B cell (primary cell): ENCODE measurements at regions of chr5 and their contacts with region 1.

Region 1: DNA sequence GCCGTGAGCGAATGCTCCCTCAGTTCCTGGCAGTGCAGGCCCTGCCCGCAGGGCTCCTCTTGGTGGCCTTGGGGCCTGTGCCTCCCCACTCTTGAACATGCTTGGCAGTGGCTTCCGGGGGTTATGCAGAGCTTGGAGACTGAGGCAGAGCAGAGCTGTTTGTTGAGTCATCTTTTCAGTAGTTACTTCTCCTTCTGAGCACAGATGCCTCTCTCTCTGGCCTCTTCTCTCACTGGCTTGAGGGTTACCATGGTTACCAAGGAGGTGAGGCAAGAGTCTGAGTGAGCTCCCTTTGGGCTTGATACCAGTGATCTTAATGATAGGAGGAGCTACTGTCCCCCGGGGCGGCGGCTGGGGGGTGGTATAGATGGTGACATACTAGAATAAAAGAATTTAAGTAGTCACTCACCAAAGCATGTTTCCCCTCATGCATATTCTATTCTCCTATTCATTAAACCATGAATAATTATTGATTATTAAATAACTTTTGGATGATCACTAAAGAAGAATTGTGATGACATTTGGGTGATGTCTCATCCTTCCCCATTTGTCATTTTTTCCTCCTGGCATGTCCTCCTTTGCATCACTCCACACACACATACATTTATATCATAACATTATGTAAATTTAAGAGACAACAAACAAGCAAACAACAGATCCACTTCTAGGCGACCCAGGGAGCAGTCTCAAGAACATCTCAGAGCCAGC is 111.1 kb downstream of the ARHGAP26 start:
- DNase-seq: peak; percentile 47
- ATAC-seq: peak; percentile 54
- H3K4me3 ChIP-seq: no peak overlapping the region
- H3K4me3 Mint-ChIP-seq: no peak overlapping the region
- H3K27ac ChIP-seq: no peak overlapping the region
- H3K27ac Mint-ChIP-seq: no peak overlapping the region
- H3K4me1 ChIP-seq: peaks cover 0 to 5% of the 10 kb centered on the region in 2 donors
- H3K4me1 Mint-ChIP-seq: peaks cover 9% of the 10 kb centered on the region
- H3K27me3 ChIP-seq: no peaks in the 10 kb centered on the region
- H3K27me3 Mint-ChIP-seq: no peaks in the 10 kb centered on the region
- CTCF ChIP-seq: no peak

Region 2: GRCh38 chr5:142655339-142656267 is 225.6 kb before region 1 on chr5:
- CTCF ChIA-PET with region 1: interaction called, 31 read pairs
- POLR2A ChIA-PET with region 1: no interaction called
- intact Hi-C with region 1: loop called (anchors 1 kb)
- DNase-seq: peak; percentile 60
- ATAC-seq: peak; percentile 75
- H3K4me3 ChIP-seq: no peak overlapping the region
- H3K4me3 Mint-ChIP-seq: no peak overlapping the region
- H3K27ac ChIP-seq: no peak overlapping the region
- H3K27ac Mint-ChIP-seq: no peak overlapping the region
- H3K4me1 ChIP-seq: no peaks in the 10 kb centered on the region
- H3K4me1 Mint-ChIP-seq: no peaks in the 10 kb centered on the region
- H3K27me3 ChIP-seq: peaks cover 0 to 12% (median 2%) of the 10 kb centered on the region in 4 experiments
- H3K27me3 Mint-ChIP-seq: peaks cover 50% of the 10 kb centered on the region
- CTCF ChIP-seq: peak; percentile 91

Region 3: DNA sequence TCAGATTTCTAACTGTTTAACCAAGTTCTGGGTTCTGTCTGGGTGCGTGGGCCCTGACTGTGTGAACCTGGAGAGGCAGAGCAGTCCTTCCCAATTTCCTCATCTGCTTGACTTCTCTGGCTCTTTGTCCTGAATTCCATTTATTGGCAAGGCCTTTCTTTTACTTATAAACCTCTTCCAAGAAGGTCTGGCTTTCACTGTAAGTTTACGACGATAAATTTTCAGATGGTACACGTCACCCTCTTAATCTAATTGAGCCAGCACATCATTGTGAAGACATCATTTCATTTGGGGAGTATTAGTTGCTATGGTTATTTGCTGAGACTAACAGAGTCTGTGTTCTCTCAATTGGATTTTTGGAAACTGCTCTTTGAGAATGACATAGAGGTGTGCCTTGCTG is 18.6 kb before region 1 on chr5:
- CTCF ChIA-PET with region 1: interaction called, 44 read pairs
- POLR2A ChIA-PET with region 1: no interaction called
- intact Hi-C with region 1: loop called (anchors 2 kb)
- DNase-seq: no peak
- ATAC-seq: no peak
- H3K4me3 ChIP-seq: no peak overlapping the region
- H3K4me3 Mint-ChIP-seq: no peak overlapping the region
- H3K27ac ChIP-seq: no peak overlapping the region
- H3K27ac Mint-ChIP-seq: no peak overlapping the region
- H3K4me1 ChIP-seq: peaks cover 3 to 4% of the 10 kb centered on the region in 2 donors
- H3K4me1 Mint-ChIP-seq: peaks cover 13% of the 10 kb centered on the region
- H3K27me3 ChIP-seq: no peaks in the 10 kb centered on the region
- H3K27me3 Mint-ChIP-seq: no peaks in the 10 kb centered on the region
- CTCF ChIP-seq: no peak